Heart left ventricle (tissue), 16 donors: ENCODE measurements at regions of chr1 and their contacts with region 1.

Region 1: GRCh38 chr1:25695090-25695770 is 78.6 kb downstream of the MAN1C1 start:
- DNase-seq: peak; percentile 75 to 89 (median 77)
- ATAC-seq: peak; percentile 73 to 87 (median 82)
- H3K4me3 ChIP-seq: no peak overlapping the region
- H3K27ac ChIP-seq: peak overlapping the region; percentile 61 to 99 (median 86)
- H3K4me1 ChIP-seq: peaks cover 6 to 81% (median 51%) of the 10 kb centered on the region in 12 donors
- H3K27me3 ChIP-seq: no peaks in the 10 kb centered on the region
- CTCF ChIP-seq: peak in 8 of 12 donors; percentile 13 to 51 (median 29)
- POLR2A ChIP-seq: no peak

Region 2: GRCh38 chr1:25543425-25544242 is 151.6 kb before region 1 on chr1 and contains the start of gene LDLRAP1:
- intact Hi-C with region 1: loop called in 1 of 10 experiments (anchors 10 kb)
- DNase-seq: peak; percentile 82 to 92 (median 83)
- ATAC-seq: peak; percentile 79 to 96 (median 94)
- H3K4me3 ChIP-seq: peak within 1 kb of the TSS; percentile 82 to 99 (median 94)
- H3K27ac ChIP-seq: peak within 1 kb of the TSS; percentile 43 to 96 (median 88)
- H3K4me1 ChIP-seq: peaks cover 3 to 48% (median 33%) of the 10 kb centered on the region in 12 donors
- H3K27me3 ChIP-seq: no peaks in the 10 kb centered on the region
- CTCF ChIP-seq: peak in 2 of 12 donors; percentile 11 to 12
- POLR2A ChIP-seq: peak; percentile 82 to 96
- total RNA-seq, gene LDLRAP1: 9.9 to 17.4 (median 13.3) TPM

Region 3: DNA sequence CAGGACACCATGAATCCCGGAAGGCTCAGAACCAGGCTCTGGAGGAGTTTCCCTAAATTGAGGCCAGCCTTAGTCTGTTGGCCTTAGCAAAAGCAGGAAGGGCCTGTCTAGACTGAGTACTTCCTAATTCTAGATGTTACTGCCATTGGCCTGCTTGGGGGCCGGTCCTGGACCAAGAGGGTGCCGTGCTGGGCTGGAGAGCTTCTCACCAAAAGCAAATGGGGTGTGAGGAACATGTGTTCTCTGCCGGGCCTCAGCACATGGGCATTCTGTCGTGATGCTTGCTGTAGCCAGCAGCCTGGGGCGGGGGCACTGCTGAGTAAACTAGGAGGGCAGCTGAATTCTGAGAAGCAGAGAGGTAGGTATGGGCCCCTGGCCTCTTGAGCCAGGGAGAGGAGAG is 114.3 kb before region 1 on chr1:
- intact Hi-C with region 1: no loop called
- DNase-seq: no peak
- ATAC-seq: peak in 2 of 4 donors; percentile 12 to 17
- H3K4me3 ChIP-seq: no peak overlapping the region
- H3K27ac ChIP-seq: no peak overlapping the region
- H3K4me1 ChIP-seq: peaks cover 0 to 8% (median 0%) of the 10 kb centered on the region in 12 donors
- H3K27me3 ChIP-seq: no peaks in the 10 kb centered on the region
- CTCF ChIP-seq: no peak
- POLR2A ChIP-seq: no peak

Region 4: DNA sequence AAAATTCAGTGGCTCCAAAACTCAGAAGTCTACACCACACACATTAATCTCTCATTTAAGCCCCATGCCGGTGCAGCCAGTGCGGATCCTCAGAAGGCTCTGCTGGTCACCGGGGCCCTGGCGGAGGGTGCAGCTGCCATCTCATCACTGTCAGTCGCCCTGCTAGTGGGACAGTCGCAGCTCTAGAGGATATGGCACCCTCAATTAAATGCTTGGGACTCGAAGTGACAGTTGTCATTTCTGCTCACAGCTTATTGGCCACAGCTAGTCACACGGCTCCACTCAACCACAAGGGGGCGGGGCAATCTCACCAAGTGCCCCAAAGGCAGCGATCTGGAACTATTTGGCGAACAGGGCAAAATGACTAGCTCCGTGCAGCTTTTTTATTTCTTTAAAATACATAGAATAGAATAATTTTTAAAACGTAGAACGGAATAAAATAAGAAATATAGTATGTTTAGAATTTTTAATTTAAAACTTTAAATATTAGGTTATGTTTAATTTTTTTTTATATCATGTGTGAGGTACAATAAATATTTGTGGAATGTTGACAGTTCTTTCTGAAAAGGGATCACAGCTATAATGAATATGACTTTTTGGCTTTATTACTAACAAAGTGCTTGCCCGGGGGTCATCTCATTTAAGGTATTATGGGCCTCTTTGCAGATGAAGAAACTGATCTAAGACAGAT is 86.6 kb before region 1 on chr1:
- intact Hi-C with region 1: no loop called
- DNase-seq: peak; percentile 86 to 92 (median 88)
- ATAC-seq: peak; percentile 74 to 96 (median 90)
- H3K4me3 ChIP-seq: peak overlapping the region in 7 of 12 donors; percentile 13 to 34 (median 29)
- H3K27ac ChIP-seq: peak overlapping the region in 1 of 12 donors; percentile 32
- H3K4me1 ChIP-seq: peaks cover 0 to 11% (median 0%) of the 10 kb centered on the region in 12 donors
- H3K27me3 ChIP-seq: no peaks in the 10 kb centered on the region
- CTCF ChIP-seq: peak; percentile 58 to 90 (median 79)
- POLR2A ChIP-seq: no peak

Region 5: GRCh38 chr1:25658791-25659431 is 36.3 kb before region 1 on chr1:
- intact Hi-C with region 1: loop called in 1 of 10 experiments (anchors 5 kb)
- DNase-seq: peak in 4 of 5 donors; percentile 78 to 89 (median 86)
- ATAC-seq: peak; percentile 95 to 96 (median 95)
- H3K4me3 ChIP-seq: no peak overlapping the region
- H3K27ac ChIP-seq: peak overlapping the region in 11 of 12 donors; percentile 3 to 83 (median 74)
- H3K4me1 ChIP-seq: peaks cover 2 to 71% (median 40%) of the 10 kb centered on the region in 12 donors
- H3K27me3 ChIP-seq: no peaks in the 10 kb centered on the region
- CTCF ChIP-seq: no peak
- POLR2A ChIP-seq: no peak

Region 6: GRCh38 chr1:25743826-25744581 is 48.8 kb after region 1 on chr1:
- intact Hi-C with region 1: loop called in 7 of 10 experiments (anchors 1 to 5 kb)
- DNase-seq: peak; percentile 76 to 88 (median 79)
- ATAC-seq: peak; percentile 86 to 91 (median 88)
- H3K4me3 ChIP-seq: no peak overlapping the region
- H3K27ac ChIP-seq: peak overlapping the region; percentile 81 to 99 (median 92)
- H3K4me1 ChIP-seq: peaks cover 0 to 39% (median 28%) of the 10 kb centered on the region in 12 donors
- H3K27me3 ChIP-seq: no peaks in the 10 kb centered on the region
- CTCF ChIP-seq: peak; percentile 27 to 73 (median 53)
- POLR2A ChIP-seq: no peak